ENCODE measurements at regions of chr16 and their contacts with region 1.

Region 1: DNA sequence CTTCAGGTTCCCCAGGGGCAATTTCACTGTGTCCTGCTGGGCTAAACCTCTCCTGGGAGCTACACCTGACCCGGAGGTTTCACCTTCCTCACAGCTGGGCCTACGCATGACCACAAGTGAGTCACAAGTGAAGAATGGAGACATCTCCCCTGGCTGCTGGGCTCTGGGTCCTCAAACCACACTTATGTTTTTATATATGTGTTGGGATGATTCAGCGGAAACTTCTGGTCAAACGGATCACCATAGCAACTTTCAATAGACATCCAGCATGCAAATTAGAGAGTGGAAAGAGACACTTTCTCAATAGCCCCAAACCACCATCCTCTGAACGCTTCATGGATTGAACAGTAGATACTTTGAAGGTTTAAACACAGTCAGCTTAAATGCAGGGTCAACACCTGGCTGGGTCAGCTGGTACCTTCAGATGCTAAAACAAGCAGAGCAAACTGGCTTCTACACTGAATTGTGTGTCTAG is 28.0 kb upstream of the MAF start:
- DNase-seq: no peak
- H3K4me3 ChIP-seq: no peak overlapping the region
- H3K27ac ChIP-seq: no peak overlapping the region
- H3K4me1 ChIP-seq: no peaks in the 10 kb centered on the region
- H3K27me3 ChIP-seq: no peaks in the 10 kb centered on the region
- CTCF ChIP-seq: no peak
- EP300 ChIP-seq: no peak
- POLR2A ChIP-seq: no peak

Region 2: GRCh38 chr16:79213214-79213613 is 415.3 kb before region 1 on chr16:
- in situ Hi-C with region 1: no loop called
- intact Hi-C with region 1: no loop called
- DNase-seq: peak; percentile 17
- H3K4me3 ChIP-seq: no peak overlapping the region
- H3K27ac ChIP-seq: no peak overlapping the region
- H3K4me1 ChIP-seq: peaks cover 0 to 3% (median 1%) of the 10 kb centered on the region in 4 donors
- H3K27me3 ChIP-seq: no peaks in the 10 kb centered on the region
- CTCF ChIP-seq: no peak
- EP300 ChIP-seq: no peak
- POLR2A ChIP-seq: no peak

Region 3: DNA sequence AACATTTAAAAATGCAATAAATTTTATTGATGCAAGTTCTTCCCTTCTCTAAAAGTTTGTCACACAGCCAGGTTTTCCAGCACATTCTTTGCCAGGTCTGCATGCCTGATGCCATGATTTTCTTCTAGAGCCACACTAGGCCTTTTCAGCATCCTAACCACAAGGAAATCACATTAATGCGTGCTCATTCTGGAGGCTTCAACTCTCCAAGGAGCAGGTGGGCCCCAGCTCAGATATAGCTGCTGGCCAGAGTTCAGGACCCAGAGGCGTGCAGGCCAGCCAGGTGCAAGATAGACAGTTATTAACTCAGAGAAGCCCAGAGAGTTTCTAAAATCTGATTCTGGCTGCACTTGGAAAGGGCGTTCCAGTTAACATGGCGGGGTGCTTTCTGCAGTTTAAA is 96.5 kb after region 1 on chr16:
- in situ Hi-C with region 1: loop called in 1 of 4 experiments (anchors 25 kb)
- intact Hi-C with region 1: no loop called
- DNase-seq: no peak
- H3K4me3 ChIP-seq: no peak overlapping the region
- H3K27ac ChIP-seq: no peak overlapping the region
- H3K4me1 ChIP-seq: peaks cover 0 to 14% (median 5%) of the 10 kb centered on the region in 4 donors
- H3K27me3 ChIP-seq: no peaks in the 10 kb centered on the region
- CTCF ChIP-seq: no peak
- EP300 ChIP-seq: no peak
- POLR2A ChIP-seq: no peak

Measured in transverse colon (tissue), 4 donors.